ENCODE measurements at regions of chr20 and their contacts with region 1.

Region 1: GRCh38 chr20:1466211-1467081 is at the start of gene NSFL1C:
- DNase-seq: peak; percentile 100
- H3K4me3 Mint-ChIP-seq: peak within 1 kb of the TSS; percentile 90
- H3K27ac Mint-ChIP-seq: peak within 1 kb of the TSS; percentile 82
- H3K4me1 Mint-ChIP-seq: peaks cover 44% of the 10 kb centered on the region
- H3K27me3 Mint-ChIP-seq: peaks cover 19% of the 10 kb centered on the region
- total RNA-seq, gene NSFL1C: 101 and 109 TPM in 2 replicates

Region 2: DNA sequence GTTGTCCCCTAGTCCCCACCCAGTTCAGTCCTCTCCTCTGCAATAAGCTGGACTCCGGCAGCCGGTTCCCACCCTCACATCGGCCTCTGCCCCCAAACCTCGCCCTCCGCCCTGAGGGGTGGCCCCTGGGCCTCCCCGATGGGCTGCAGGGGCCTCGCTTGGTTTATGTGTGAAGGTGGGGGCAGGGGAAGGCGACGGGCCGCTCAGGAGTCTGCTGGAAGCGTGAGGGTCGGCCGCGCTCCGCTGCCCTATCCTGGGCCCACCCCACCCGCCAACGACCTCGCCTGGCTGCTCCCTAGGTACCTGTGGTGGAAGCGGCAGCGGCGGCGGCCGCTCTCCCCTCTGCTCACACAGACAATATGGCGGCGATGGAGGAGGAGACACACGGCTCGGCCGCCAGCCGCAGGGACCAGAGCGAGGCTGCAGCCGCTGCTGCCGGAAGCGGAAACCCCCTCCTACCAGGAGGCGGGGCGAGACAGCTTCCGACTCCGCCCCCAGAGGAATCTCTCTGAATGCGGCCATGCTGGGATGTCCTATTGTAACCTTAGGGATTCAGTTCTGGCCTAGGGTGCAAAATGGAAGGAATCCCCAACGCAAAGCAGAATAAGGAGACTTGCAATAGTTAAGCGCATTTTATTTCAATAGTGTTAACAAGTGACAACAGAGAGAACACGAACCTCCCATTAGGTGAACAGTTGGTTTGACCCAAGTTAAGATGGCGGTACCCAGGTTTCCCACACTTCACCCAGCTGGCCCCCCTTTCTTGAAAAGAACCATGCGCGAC is 922.9 kb before region 1 on chr20 and contains the start of gene CSNK2A1:
- intact Hi-C with region 1: loop called (anchors 5 kb)
- DNase-seq: peak; percentile 99
- H3K4me3 Mint-ChIP-seq: peak within 1 kb of the TSS; percentile 88
- H3K27ac Mint-ChIP-seq: peak within 1 kb of the TSS; percentile 97
- H3K4me1 Mint-ChIP-seq: peaks cover 38% of the 10 kb centered on the region
- H3K27me3 Mint-ChIP-seq: peaks cover 9% of the 10 kb centered on the region
- total RNA-seq, gene CSNK2A1: 179 TPM in 2 replicates

Region 3: GRCh38 chr20:844473-845225 is 621.8 kb before region 1 on chr20:
- intact Hi-C with region 1: loop called (anchors 10 kb)
- DNase-seq: peak; percentile 96
- H3K4me3 Mint-ChIP-seq: peak overlapping the region; percentile 87
- H3K27ac Mint-ChIP-seq: peak overlapping the region; percentile 57
- H3K4me1 Mint-ChIP-seq: peaks cover 46% of the 10 kb centered on the region
- H3K27me3 Mint-ChIP-seq: no peaks in the 10 kb centered on the region

Region 4: GRCh38 chr20:1225783-1226654 is 240.4 kb before region 1 on chr20 and contains the start of gene RAD21L1:
- intact Hi-C with region 1: loop called (anchors 5 kb)
- DNase-seq: peak; percentile 88
- H3K4me3 Mint-ChIP-seq: peak within 1 kb of the TSS; percentile 86
- H3K27ac Mint-ChIP-seq: peak within 1 kb of the TSS; percentile 11
- H3K4me1 Mint-ChIP-seq: peaks cover 16% of the 10 kb centered on the region
- H3K27me3 Mint-ChIP-seq: peaks cover 50% of the 10 kb centered on the region
- total RNA-seq, gene RAD21L1: not detected in 2 replicates

Region 5: DNA sequence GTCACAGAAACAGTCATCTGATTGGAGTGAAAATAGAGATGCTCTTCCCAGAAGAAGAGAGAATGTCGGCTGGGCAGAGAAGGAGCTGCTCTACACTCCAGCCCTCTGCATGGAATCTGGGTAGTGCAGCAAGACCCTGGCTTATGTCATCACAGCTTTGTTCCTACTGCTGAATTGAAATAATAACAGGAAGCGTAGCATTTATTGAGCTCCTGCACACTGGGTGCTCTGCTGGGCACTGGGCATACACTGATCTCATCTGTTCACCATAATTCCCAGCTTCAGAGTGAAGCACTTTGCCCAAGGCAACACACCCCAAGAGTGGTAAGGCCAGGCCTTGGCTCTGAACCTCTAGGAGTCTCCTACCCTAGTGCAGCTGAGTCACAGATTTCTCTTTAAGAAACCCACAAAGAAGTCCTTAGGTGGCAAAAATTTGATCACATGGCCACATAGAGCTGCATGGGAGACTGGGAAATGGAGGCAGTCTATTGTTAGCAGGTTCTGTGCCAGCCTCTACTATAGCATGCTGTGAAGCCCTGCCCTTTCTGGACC is 133.6 kb before region 1 on chr20:
- intact Hi-C with region 1: no loop called
- DNase-seq: no peak
- H3K4me3 Mint-ChIP-seq: no peak overlapping the region
- H3K27ac Mint-ChIP-seq: peak overlapping the region; percentile 36
- H3K4me1 Mint-ChIP-seq: peaks cover 49% of the 10 kb centered on the region
- H3K27me3 Mint-ChIP-seq: no peaks in the 10 kb centered on the region

Region 6: DNA sequence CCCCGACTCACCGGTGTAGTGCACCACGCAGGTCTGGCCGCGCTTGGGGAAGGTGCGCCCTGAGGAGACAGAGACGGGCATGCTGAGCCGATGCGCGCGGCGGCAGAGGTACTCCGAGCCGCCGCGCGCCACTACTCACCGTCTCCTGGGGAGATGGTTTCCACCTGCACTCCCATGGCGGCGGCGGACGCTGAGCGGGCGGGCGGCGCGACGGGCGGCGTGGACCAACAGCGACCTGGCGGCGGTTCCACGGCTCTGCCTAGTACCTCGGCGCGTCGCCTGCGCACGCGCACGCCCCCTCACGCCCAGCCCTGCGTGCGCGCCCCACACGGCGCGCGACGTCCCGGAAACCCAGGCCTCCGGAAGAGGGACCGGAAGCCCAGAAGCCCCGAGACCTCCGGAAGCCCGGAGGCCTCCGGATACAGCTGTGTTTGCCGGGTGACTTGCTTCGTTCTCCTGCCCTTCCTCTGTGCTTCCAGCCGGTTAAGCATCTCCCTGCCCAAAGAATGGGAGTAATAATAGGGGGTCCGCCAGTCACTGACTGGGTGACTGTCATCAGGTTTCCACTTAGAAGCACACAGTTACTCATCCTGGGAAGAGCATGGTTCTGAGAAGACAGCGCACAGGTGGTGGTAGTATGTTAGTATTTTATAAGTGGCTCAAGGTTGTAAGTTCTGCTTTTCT is 73.5 kb before region 1 on chr20 and contains the start of gene FKBP1A:
- intact Hi-C with region 1: loop called (anchors 1 kb)
- DNase-seq: peak; percentile 97
- H3K4me3 Mint-ChIP-seq: peak within 1 kb of the TSS; percentile 79
- H3K27ac Mint-ChIP-seq: peak within 1 kb of the TSS; percentile 90
- H3K4me1 Mint-ChIP-seq: peaks cover 51% of the 10 kb centered on the region
- H3K27me3 Mint-ChIP-seq: peaks cover 3% of the 10 kb centered on the region
- total RNA-seq, gene FKBP1A: 291 and 292 TPM in 2 replicates

Region 7: GRCh38 chr20:1503564-1504227 is 37.2 kb after region 1 on chr20:
- intact Hi-C with region 1: loop called (anchors 1 kb)
- DNase-seq: peak; percentile 92
- H3K4me3 Mint-ChIP-seq: no peak overlapping the region
- H3K27ac Mint-ChIP-seq: no peak overlapping the region
- H3K4me1 Mint-ChIP-seq: peaks cover 8% of the 10 kb centered on the region
- H3K27me3 Mint-ChIP-seq: peaks cover 49% of the 10 kb centered on the region

Region 8: DNA sequence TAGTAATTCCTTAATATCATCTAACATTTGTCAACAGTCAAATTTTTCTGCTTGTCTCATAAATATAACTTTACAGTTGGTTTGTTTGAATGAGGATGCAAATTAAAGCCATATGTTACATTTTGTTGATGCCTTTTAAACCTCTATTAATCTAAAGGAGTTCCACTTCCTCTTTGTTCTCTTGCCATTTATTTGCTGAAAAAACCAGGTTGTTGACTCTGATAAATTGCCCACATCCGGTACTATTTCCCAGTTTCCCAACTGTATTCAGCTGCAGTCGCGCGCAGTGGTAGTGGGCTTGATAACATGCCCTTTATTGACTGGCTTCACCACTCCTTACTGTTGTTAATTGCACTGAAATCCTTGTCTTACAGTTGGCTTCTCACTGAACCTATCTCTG is 57.6 kb after region 1 on chr20:
- intact Hi-C with region 1: no loop called
- DNase-seq: no peak
- H3K4me3 Mint-ChIP-seq: no peak overlapping the region
- H3K27ac Mint-ChIP-seq: no peak overlapping the region
- H3K4me1 Mint-ChIP-seq: no peaks in the 10 kb centered on the region
- H3K27me3 Mint-ChIP-seq: peaks cover 15% of the 10 kb centered on the region

Region 9: GRCh38 chr20:1576641-1577040 is 110.2 kb after region 1 on chr20:
- intact Hi-C with region 1: no loop called
- DNase-seq: peak; percentile 34
- H3K4me3 Mint-ChIP-seq: no peak overlapping the region
- H3K27ac Mint-ChIP-seq: no peak overlapping the region
- H3K4me1 Mint-ChIP-seq: peaks cover 13% of the 10 kb centered on the region
- H3K27me3 Mint-ChIP-seq: no peaks in the 10 kb centered on the region

Region 10: DNA sequence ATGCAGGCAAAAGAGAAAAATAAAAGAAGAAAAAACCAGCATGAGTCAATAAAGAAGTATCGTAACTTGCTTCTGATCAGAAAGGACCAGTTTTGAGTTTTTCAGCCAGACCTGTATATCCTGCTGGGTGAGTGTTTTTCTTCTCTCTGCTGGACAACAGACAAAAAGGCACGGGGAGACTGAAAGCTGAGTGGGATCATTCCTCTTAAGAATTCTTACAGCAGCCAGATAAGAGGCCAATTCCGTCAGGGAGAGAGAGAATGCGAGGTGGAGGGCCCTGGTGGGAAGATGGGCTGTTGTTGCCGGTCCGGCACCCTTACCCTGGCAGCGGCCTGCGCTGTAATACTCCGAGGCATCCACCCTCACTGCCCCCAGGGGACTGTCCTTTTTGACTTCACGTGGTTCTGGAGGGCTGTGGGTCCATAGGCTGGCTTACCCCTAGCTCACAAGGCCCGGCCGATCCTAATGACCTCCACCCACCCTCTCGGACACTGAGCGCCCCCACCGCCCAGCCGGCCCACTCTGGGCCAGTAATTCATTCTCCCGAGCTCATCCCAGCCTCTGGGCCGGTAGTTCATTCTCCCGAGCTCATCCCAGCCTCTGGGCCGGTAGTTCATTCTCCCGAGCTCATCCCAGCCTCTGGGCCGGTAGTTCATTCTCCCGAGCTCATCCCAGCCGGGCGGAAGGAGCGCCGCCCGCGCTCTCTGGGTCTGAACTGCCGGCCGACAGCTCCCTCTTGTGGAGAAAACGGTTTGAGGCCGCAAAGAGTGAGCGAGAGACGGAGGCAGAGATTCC is 310.4 kb after region 1 on chr20:
- intact Hi-C with region 1: loop called (anchors 2 kb)
- DNase-seq: peak; percentile 95
- H3K4me3 Mint-ChIP-seq: peak overlapping the region; percentile 84
- H3K27ac Mint-ChIP-seq: peak overlapping the region; percentile 66
- H3K4me1 Mint-ChIP-seq: peaks cover 11% of the 10 kb centered on the region
- H3K27me3 Mint-ChIP-seq: peaks cover 12% of the 10 kb centered on the region